ENCODE measurements at regions of chr1 and their contacts with region 1.

Region 1: GRCh38 chr1:92502247-92502646 is 15.5 kb upstream of the GFI1 start:
- DNase-seq: no peak
- H3K4me3 ChIP-seq: no peak overlapping the region
- H3K27ac ChIP-seq: no peak overlapping the region
- H3K4me1 ChIP-seq: no peaks in the 10 kb centered on the region
- H3K27me3 ChIP-seq: no peaks in the 10 kb centered on the region
- CTCF ChIP-seq: no peak
- EP300 ChIP-seq: no peak
- POLR2A ChIP-seq: no peak

Region 2: DNA sequence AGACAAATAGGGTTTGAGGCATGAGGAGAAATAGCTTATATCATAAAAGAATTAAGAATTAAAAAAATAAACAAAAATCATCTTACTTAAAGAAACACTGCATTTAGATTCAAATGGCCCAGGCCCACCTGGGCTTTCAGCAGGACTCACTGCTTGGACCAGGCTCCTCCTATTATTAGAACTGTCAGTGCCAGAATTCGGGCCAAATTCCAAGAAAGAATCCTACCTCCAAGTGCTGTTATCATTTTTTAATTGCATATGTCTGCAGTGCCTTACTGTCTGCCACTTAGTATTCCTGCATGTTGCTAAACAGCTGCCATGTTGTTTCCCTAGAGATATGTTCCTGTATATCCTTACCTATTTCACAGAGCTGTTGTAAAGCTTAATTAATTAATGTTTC is 1897.2 kb before region 1 on chr1:
- in situ Hi-C with region 1: no loop called
- intact Hi-C with region 1: loop called (anchors 5 kb)
- DNase-seq: no peak
- H3K4me3 ChIP-seq: no peak overlapping the region
- H3K27ac ChIP-seq: no peak overlapping the region
- H3K4me1 ChIP-seq: no peaks in the 10 kb centered on the region
- H3K27me3 ChIP-seq: no peaks in the 10 kb centered on the region
- CTCF ChIP-seq: no peak
- EP300 ChIP-seq: no peak
- POLR2A ChIP-seq: no peak